Activated CD8-positive, alpha-beta T cell treated with anti-CD3 and anti-CD28 coated beads for 36 hours (primary cell): ENCODE measurements at regions of chr6 and their contacts with region 1.

Region 1: DNA sequence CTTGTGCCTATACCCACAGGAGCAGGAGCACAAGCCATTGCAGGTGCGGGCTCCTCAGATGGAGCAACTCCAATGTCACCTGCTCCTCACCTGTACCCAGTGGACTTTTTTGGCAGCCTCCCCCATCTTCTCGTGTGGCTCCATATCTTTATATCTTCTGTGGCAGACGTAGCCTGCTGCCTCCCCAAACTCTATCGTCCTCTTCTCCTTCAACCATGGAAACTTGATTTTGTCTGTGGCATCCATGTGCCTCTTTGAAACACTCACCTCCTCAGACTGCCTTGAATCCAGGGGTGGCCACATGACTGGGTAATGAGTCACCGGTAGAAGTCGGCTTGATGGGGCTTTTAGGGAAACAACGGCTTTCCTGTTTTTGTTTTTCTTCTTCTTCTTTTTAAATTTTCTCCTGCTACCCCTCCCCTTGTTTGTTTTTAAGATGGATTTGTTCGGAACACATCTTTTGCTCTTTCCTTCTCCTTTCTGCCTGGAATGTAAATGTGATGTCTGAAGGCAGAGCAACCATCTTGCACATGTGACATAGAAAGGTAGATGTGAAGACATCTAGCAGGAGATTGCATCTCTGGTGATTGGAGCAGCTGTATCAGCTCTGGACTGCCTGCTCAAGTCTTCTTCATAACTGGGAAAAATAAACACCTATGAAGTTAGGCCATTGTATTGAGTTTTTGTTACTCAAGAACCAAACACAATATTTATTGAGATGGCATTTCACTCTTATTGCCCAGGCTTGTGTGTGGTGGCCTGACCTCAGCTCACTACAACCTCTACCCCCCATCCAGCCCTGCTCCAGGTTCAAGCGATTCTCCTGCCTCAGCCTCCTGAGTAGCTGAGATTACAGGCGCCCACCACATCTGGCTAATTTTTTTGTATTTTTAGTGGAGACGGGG is 69.9 kb upstream of the DDR1 start:
- DNase-seq: peak; percentile 82
- ATAC-seq: peak; percentile 29
- H3K4me3 Mint-ChIP-seq: peak overlapping the region; percentile 41
- H3K27ac Mint-ChIP-seq: peak overlapping the region; percentile 98
- H3K4me1 Mint-ChIP-seq: peaks cover 83% of the 10 kb centered on the region
- H3K27me3 Mint-ChIP-seq: no peaks in the 10 kb centered on the region
- CTCF ChIP-seq: no peak

Region 2: GRCh38 chr6:30678964-30679726 is 135.2 kb before region 1 on chr6:
- CTCF ChIA-PET with region 1: interaction called, 5 read pairs
- POLR2A ChIA-PET with region 1: interaction called, 5 read pairs
- intact Hi-C with region 1: loop called (anchors 5 kb)
- DNase-seq: peak; percentile 92
- ATAC-seq: peak; percentile 27
- H3K4me3 Mint-ChIP-seq: peak overlapping the region; percentile 88
- H3K27ac Mint-ChIP-seq: peak overlapping the region; percentile 95
- H3K4me1 Mint-ChIP-seq: peaks cover 11% of the 10 kb centered on the region
- H3K27me3 Mint-ChIP-seq: no peaks in the 10 kb centered on the region
- CTCF ChIP-seq: peak; percentile 97

Region 3: DNA sequence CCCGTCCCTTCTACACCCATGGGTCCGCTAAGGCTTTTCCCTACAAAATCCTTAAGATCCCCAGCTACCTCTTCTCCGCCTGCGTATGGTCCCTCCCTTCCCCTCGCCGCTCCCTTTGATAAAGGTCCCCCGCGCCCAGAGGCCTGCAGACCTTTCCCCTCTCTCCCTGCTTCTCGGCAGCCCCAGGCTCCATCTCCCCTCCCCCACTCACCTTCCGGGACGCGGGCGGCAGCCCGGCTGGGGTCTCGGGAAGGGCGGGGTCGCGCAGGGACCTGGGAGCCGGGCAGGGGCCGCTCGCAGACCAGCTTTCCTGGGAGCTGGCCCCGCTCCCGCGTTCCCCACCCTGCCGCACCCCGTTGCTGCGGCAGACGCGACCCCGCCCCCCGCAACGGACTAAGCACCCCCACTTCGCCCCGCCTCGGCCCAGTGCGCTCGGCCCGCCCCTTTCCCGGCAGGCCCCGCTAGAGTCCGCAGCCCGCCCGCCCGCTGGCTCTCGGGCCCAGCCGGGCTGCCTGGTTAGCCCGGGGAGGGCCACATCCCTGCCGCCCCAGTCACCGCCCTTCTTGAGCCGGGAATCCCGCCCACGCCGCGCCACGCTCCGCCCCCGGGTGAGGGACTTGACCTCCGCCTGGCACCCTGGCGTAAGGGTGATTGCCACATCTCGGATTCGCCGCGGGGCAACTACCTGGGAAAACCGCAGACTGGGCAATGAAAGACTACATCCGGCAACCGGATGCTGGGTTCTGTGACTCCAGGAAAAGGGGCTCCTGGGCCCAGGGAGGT is 71.9 kb before region 1 on chr6 and contains the start of gene FLOT1:
- CTCF ChIA-PET with region 1: interaction called, 12 read pairs
- POLR2A ChIA-PET with region 1: interaction called, 212 read pairs
- intact Hi-C with region 1: loop called (anchors 5 kb)
- DNase-seq: peak; percentile 99
- ATAC-seq: peak; percentile 77
- H3K4me3 Mint-ChIP-seq: peak within 1 kb of the TSS; percentile 99
- H3K27ac Mint-ChIP-seq: peak within 1 kb of the TSS; percentile 94
- H3K4me1 Mint-ChIP-seq: peaks cover 67% of the 10 kb centered on the region
- H3K27me3 Mint-ChIP-seq: no peaks in the 10 kb centered on the region
- CTCF ChIP-seq: no peak
- total RNA-seq, gene FLOT1: 135 TPM

Region 4: DNA sequence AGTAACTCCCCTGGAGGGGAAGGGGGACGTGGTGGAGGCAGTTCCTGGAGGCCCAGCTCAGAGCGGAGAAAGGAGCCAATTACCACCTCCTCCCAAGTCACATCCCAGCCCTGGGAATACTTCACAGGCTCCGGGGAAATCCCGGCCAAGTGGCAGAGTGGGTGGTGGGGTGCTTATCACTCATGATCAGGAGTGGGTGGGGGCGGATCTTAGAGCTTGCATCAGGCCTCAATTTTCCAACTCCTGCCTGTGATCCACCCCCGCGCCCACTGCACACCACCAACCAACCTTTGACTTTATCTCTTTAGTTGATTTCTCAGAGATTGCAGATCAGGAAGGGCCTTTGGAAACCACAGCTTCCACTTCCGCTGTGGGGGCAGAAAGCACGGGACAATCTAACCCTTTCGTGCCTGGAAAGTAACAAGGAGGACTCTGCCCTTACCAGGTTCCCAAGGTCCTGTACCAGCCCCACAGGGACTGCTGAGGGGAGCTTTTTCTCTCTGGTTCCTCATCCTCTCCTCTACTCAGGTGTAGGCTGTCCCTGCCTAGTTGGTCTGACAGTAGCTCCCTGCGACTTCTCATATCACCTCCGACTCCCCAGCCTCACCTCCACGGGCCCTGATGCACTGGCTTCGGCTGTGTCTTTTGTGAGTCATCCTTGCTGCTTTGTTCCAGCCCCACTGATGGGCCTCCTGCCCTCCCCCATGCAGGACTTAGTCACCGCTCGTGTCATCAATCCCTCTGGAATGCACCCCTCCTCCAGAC is 45.1 kb before region 1 on chr6:
- CTCF ChIA-PET with region 1: interaction called, 4 read pairs
- POLR2A ChIA-PET with region 1: interaction called, 59 read pairs
- intact Hi-C with region 1: loop called (anchors 1 kb)
- DNase-seq: peak; percentile 97
- ATAC-seq: peak; percentile 70
- H3K4me3 Mint-ChIP-seq: peak overlapping the region; percentile 75
- H3K27ac Mint-ChIP-seq: peak overlapping the region; percentile 99
- H3K4me1 Mint-ChIP-seq: peaks cover 82% of the 10 kb centered on the region
- H3K27me3 Mint-ChIP-seq: no peaks in the 10 kb centered on the region
- CTCF ChIP-seq: no peak

Region 5: DNA sequence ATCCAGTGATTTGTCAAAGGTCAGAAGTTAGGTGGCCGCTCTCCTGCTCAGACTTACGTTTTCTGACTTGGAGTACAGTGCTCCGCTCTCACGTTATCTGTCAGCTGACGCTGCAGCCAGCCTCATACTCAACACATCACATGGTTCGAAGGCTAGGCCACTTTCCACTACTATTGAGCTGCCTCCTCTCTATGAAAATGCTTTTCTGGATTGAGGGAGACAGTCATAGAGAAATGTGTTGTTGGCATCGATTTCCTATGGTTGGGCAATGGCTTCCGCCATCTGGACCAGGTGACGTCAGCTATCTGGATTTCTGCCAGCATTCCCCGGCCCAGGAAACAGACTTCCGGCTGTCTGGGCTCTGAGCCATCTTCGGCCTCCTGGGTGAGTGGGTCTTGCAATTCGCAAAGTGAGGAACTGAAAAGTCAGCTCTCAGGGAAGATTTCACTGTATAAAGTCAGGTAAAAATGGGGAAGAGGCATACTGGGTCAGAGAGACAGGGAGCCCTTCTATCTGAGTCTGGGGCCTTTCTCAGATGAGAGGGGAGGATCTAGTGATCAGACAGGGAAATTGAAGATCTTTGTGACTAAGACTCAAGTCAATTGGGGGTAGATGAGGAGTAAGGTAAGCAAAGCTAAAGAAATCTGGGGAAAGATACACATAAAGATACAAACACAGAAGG is 32.5 kb before region 1 on chr6:
- CTCF ChIA-PET with region 1: interaction called, 3 read pairs
- POLR2A ChIA-PET with region 1: interaction called, 67 read pairs
- intact Hi-C with region 1: no loop called
- DNase-seq: no peak
- ATAC-seq: peak; percentile 8
- H3K4me3 Mint-ChIP-seq: peak overlapping the region; percentile 44
- H3K27ac Mint-ChIP-seq: peak overlapping the region; percentile 85
- H3K4me1 Mint-ChIP-seq: peaks cover 72% of the 10 kb centered on the region
- H3K27me3 Mint-ChIP-seq: no peaks in the 10 kb centered on the region
- CTCF ChIP-seq: no peak